ENCODE measurements at regions of chr2 and their contacts with region 1.

Region 1: GRCh38 chr2:111120253-111121027 is at the start of gene BCL2L11:
- DNase-seq: peak; percentile 88
- H3K4me3 Mint-ChIP-seq: peak within 1 kb of the TSS; percentile 83
- H3K27ac Mint-ChIP-seq: peak within 1 kb of the TSS; percentile 44
- H3K4me1 Mint-ChIP-seq: peaks cover 52% of the 10 kb centered on the region
- H3K27me3 Mint-ChIP-seq: peaks cover 22% of the 10 kb centered on the region
- total RNA-seq, gene BCL2L11: 11.5 to 12.8 TPM

Region 2: DNA sequence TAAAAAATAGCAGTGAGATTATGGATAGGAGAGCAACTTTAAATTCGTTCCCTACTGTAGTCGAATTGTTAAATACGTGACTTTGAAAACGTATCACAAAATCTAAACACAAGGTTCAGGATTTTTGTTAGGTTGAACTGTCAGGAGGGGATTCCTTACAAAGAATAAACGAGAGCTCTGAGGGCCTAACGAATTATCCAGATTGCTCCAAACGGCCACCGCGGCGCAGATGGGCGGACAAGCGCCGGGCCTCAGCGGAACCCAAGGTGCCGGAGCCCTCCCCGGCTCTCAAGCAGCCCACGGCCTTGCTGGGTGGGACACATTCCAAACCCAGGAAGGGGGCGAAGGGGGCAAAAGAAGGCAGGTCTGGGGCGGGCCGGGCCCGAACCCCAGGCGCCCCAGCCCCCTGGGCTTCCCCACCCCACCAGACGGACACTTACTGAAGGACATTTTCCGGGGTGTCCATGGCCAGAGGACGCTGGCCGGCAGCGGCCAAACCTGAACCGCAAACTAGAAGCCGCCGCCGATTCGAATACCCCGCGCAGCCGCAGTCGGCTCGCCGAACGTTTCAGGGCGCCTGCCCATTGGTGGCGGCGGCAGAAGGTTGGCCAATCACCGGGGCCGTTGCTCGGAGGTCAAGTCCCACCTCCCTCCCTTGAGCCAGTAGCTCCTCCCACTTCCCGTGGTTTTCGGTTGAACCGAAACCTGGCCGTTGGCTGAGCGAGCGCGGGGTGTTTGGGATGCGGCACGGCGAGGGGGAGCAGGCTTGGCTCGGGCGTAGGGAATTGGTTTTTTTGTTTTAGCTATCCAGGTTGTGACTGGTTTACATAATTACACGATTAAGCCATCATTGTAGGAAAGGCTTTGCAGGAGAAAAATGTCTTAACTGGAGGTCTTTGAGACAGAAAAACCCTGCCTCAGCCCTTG is 442.6 kb before region 1 on chr2 and contains the start of gene BUB1:
- CTCF ChIA-PET with region 1: no interaction called
- intact Hi-C with region 1: loop called (anchors 5 kb)
- DNase-seq: peak; percentile 98
- H3K4me3 Mint-ChIP-seq: peak within 1 kb of the TSS; percentile 92
- H3K27ac Mint-ChIP-seq: peak within 1 kb of the TSS; percentile 93
- H3K4me1 Mint-ChIP-seq: peaks cover 17% of the 10 kb centered on the region
- H3K27me3 Mint-ChIP-seq: no peaks in the 10 kb centered on the region
- total RNA-seq, gene BUB1: 103 to 107 TPM

Region 3: GRCh38 chr2:110804915-110805314 is 315.5 kb before region 1 on chr2:
- CTCF ChIA-PET with region 1: no interaction called
- intact Hi-C with region 1: loop called (anchors 2 kb)
- DNase-seq: peak; percentile 87
- H3K4me3 Mint-ChIP-seq: no peak overlapping the region
- H3K27ac Mint-ChIP-seq: no peak overlapping the region
- H3K4me1 Mint-ChIP-seq: peaks cover 16% of the 10 kb centered on the region
- H3K27me3 Mint-ChIP-seq: peaks cover 64% of the 10 kb centered on the region

Region 4: GRCh38 chr2:110853507-110853906 is 266.9 kb before region 1 on chr2:
- CTCF ChIA-PET with region 1: no interaction called
- intact Hi-C with region 1: loop called (anchors 5 kb)
- DNase-seq: peak; percentile 78
- H3K4me3 Mint-ChIP-seq: no peak overlapping the region
- H3K27ac Mint-ChIP-seq: no peak overlapping the region
- H3K4me1 Mint-ChIP-seq: peaks cover 36% of the 10 kb centered on the region
- H3K27me3 Mint-ChIP-seq: peaks cover 44% of the 10 kb centered on the region

Region 5: DNA sequence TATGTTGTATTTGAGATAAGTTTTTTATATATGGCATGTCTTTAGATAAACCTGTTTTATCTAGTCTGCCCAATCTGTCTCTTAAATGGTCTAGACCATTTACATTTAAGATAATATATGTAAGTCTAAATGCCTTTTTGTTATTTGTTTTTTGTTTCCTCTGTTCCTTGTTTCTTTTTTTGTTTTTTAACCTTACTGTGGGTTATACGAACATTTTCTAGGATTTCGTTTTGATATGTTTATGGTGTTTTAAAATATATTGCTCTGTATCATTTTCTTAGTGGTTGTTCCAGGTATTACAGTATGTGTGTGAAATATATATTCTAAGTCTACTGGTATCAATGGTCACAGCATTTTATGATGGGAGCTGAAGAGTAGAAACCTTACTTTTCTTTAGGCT is 13.6 kb after region 1 on chr2:
- CTCF ChIA-PET with region 1: interaction called, 7 read pairs
- intact Hi-C with region 1: loop called (anchors 1 kb)
- DNase-seq: no peak
- H3K4me3 Mint-ChIP-seq: no peak overlapping the region
- H3K27ac Mint-ChIP-seq: no peak overlapping the region
- H3K4me1 Mint-ChIP-seq: peaks cover 22% of the 10 kb centered on the region
- H3K27me3 Mint-ChIP-seq: no peaks in the 10 kb centered on the region

Region 6: GRCh38 chr2:111216811-111217652 is 96.6 kb after region 1 on chr2:
- CTCF ChIA-PET with region 1: no interaction called
- intact Hi-C with region 1: no loop called
- DNase-seq: no peak
- H3K4me3 Mint-ChIP-seq: no peak overlapping the region
- H3K27ac Mint-ChIP-seq: no peak overlapping the region
- H3K4me1 Mint-ChIP-seq: no peaks in the 10 kb centered on the region
- H3K27me3 Mint-ChIP-seq: peaks cover 24% of the 10 kb centered on the region

Region 7: DNA sequence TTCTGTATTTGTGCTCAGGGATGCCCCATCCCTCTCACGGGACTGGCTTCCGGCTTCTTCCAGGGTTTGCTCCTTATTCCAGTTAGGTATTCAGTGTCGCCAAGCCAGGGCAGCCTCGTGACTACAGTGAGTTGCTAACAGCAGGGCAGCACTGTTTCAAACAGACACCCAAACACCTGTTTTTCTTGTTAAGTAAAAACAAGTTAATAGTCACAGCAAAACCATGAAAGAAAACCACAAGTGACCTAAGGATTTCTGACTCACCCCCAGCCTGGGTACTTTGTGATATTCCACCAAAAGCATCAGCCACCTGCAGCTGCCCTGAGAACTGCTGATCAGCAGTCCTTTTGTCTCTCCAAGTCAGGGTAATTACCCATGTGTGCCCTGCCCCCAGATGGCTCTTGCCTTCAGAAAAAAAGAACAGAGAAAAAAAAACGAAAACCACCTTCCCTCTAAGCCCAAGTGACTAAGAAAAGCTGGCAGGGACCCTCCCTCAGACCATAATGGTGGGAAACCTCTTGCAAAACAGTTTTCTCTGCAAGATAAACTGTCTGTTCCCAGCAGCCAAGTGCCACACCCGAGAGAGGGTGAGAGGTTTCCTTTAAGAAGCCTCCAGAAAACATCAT is 585.4 kb after region 1 on chr2:
- CTCF ChIA-PET with region 1: interaction called, 3 read pairs
- intact Hi-C with region 1: loop called (anchors 2 kb)
- DNase-seq: peak; percentile 83
- H3K4me3 Mint-ChIP-seq: no peak overlapping the region
- H3K27ac Mint-ChIP-seq: peak overlapping the region; percentile 58
- H3K4me1 Mint-ChIP-seq: peaks cover 34% of the 10 kb centered on the region
- H3K27me3 Mint-ChIP-seq: peaks cover 20% of the 10 kb centered on the region

Measured in activated naive CD4-positive, alpha-beta T cell treated with anti-CD3 and anti-CD28 coated beads for 36 hours (primary cell).